ENCODE measurements at regions of chr12 and their contacts with region 1.

Region 1: DNA sequence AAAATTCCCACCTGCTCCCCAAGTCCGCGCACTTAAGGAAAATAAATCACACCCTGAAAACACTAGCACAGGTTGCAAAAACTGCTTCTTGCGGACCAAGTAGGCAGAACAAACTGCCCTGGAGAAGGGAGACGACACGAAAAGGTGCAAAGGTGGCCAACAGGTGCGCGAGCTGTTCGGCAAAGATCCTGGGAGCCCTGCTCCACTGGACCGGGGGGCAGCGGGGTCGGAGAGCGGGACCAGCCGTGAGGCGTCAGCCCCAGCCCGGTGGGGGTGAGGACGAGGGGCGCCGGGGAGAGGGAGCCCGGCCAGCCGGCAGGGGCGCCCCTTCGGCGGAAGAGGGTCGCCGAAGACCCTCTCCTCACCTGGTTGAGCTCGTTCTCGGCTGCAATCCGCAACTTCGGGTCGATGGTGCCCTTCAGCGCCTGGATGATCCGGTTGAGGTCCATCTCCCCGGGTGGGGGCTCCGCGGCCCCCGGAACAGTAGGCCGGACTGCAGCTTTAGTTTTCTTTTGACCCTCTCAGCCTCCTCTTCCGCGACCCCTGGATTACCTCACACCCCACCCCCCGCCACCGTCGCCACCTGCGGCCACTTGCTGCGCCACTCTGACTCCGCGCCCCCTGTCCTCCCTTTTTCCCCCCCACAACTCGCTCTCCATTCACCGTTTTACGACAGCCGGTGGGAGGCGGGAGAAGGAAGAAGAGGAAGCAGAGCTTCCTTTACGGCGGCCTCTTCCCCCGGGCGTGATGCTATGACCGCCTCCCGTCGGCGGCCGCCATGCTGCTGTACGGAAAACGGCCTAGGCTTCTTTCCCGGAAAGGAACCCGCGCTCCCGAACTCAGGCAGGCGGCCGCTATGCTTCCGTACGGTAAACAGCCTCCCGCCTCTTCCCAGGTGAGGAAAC is at the start of gene IPO8:
- DNase-seq: peak; percentile 57
- ATAC-seq: peak; percentile 96
- H3K4me3 ChIP-seq: peak within 1 kb of the TSS; percentile 95
- H3K27ac ChIP-seq: peak within 1 kb of the TSS; percentile 96
- H3K4me1 ChIP-seq: peaks cover 28% of the 10 kb centered on the region
- H3K27me3 ChIP-seq: no peaks in the 10 kb centered on the region
- CTCF ChIP-seq: peak; percentile 73
- total RNA-seq, gene IPO8: 46.6 TPM

Region 2: GRCh38 chr12:30457621-30458289 is 237.7 kb before region 1 on chr12:
- CTCF ChIA-PET with region 1: interaction called, 14 read pairs
- POLR2A ChIA-PET with region 1: no interaction called
- in situ Hi-C with region 1: no loop called
- intact Hi-C with region 1: no loop called
- DNase-seq: no peak
- ATAC-seq: no peak
- H3K4me3 ChIP-seq: no peak overlapping the region
- H3K27ac ChIP-seq: no peak overlapping the region
- H3K4me1 ChIP-seq: no peaks in the 10 kb centered on the region
- H3K27me3 ChIP-seq: no peaks in the 10 kb centered on the region
- CTCF ChIP-seq: peak; percentile 31; the same call in 1 of the 2 replicates

Region 3: GRCh38 chr12:30613119-30613830 is 82.2 kb before region 1 on chr12:
- CTCF ChIA-PET with region 1: no interaction called
- POLR2A ChIA-PET with region 1: no interaction called
- in situ Hi-C with region 1: no loop called
- intact Hi-C with region 1: no loop called
- DNase-seq: no peak
- ATAC-seq: no peak
- H3K4me3 ChIP-seq: no peak overlapping the region
- H3K27ac ChIP-seq: no peak overlapping the region
- H3K4me1 ChIP-seq: no peaks in the 10 kb centered on the region
- H3K27me3 ChIP-seq: peaks cover 7% of the 10 kb centered on the region; the same call in 1 of the 2 replicates
- CTCF ChIP-seq: no peak

Region 4: DNA sequence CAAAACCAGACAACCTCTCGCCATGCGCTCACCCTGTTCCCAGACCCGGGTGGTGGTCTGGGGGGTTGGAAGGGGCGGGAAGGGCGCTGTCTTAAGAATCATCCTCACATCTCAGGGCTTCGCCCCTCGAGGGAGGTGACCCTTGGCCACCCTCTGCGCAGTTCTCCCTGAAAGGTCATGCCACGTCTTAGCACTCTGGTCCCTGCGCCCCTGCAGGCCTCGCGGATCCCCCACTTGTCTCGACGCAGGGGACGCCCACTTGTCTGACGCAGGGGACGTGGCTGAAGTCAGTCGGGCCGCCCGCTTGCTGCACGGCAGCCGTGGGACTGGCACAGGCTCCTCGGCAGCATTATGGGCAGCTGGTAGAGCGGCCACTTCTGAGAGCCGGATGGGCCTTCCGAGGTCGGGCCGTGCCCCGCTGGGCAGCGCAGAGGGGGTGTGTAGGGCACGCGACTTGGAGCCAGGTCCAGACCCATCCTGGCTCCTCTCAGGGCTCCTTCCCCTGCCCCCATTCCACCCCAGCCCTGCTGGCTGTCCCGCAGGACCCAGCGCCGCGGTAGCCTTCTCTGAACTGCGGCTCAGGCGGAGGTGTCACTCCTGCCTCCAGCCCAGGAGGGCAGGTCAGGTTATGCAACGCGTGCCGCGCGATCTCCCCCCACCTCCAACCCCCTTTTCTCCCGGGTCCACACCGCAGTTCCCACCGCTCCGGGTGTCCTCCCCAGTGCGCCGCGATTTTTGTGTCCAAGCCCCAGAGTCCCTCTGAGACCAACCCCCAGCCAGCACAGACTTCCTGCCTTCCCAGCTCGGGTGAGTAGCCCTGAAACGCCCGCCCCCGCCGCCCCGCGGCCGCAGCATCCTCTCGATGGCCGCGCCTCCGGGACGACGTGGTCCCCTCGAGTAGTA is 100.2 kb after region 1 on chr12:
- CTCF ChIA-PET with region 1: no interaction called
- POLR2A ChIA-PET with region 1: no interaction called
- in situ Hi-C with region 1: no loop called
- intact Hi-C with region 1: no loop called
- DNase-seq: peak; percentile 54
- ATAC-seq: peak; percentile 75
- H3K4me3 ChIP-seq: peak overlapping the region; percentile 71 to 83
- H3K27ac ChIP-seq: peak overlapping the region; percentile 90
- H3K4me1 ChIP-seq: peaks cover 45% of the 10 kb centered on the region
- H3K27me3 ChIP-seq: no peaks in the 10 kb centered on the region
- CTCF ChIP-seq: no peak

Measured in Panc1 (cell line).